ENCODE measurements at regions of chr5 and their contacts with region 1.

Region 1: DNA sequence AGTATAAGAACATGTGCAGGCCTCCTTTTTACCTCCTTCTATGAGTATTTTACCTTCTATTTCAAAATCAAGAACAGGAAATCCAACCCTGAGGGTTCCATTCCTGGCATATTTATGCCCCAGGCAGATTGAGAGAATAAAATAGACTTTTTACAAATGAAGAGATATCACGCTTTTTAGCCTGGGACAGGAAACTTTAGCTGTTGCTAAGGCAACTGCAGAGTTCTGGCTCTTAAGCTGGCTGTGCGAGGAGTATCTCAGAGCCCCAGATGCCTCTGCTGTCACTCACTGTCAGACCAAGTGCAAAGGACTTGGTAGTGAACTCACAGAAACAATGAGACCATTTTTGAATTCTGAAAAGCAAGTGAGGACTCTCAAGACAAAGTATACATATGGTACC is 69.5 kb upstream of the HSPB3 start:
- DNase-seq: no peak
- H3K4me3 ChIP-seq: no peak overlapping the region
- H3K4me3 Mint-ChIP-seq: no peak overlapping the region
- H3K27ac Mint-ChIP-seq: no peak overlapping the region
- H3K4me1 ChIP-seq: peaks cover 47% of the 10 kb centered on the region
- H3K4me1 Mint-ChIP-seq: peaks cover 26% of the 10 kb centered on the region
- H3K27me3 ChIP-seq: no peaks in the 10 kb centered on the region
- H3K27me3 Mint-ChIP-seq: no peaks in the 10 kb centered on the region
- CTCF ChIP-seq: no peak

Region 2: DNA sequence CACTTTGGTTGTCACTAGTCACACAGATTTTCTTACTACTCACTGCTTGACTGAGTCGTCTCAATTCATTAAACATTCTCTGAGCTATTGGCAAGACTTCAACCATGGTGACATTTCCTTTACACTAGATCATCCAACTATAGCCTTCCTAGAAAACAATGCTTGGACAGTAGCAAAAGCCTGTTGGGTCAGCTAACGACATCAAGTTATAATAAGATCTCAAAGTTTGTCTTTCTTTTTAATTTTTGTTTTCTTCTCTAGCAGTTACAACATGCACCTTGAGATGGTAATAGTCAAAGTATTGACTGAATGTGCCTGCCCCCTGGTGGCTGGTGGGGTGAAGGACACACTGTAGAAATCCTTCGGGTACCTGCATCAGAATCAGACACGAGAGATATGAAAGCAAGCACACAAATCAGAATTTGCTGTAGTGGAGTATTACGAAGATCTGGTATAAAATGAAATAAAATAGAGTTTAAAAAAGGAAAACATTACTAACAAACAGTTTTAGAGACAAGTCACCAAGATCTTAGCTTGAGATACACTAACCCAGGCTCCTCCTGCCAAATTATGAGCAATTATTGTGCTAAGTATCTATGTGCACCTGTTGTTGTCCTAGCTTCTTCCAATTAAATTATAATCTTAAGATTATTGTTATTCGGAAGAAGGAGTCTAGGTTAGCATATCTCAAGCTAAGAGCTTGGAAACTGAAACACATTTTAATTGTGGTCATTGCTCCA is 156.8 kb before region 1 on chr5:
- CTCF ChIA-PET with region 1: no interaction called
- POLR2A ChIA-PET with region 1: no interaction called
- intact Hi-C with region 1: no loop called
- DNase-seq: peak; percentile 57 to 76
- H3K4me3 ChIP-seq: no peak overlapping the region
- H3K4me3 Mint-ChIP-seq: no peak overlapping the region
- H3K27ac Mint-ChIP-seq: no peak overlapping the region
- H3K4me1 ChIP-seq: no peaks in the 10 kb centered on the region
- H3K4me1 Mint-ChIP-seq: peaks cover 6% of the 10 kb centered on the region
- H3K27me3 ChIP-seq: no peaks in the 10 kb centered on the region
- H3K27me3 Mint-ChIP-seq: no peaks in the 10 kb centered on the region
- CTCF ChIP-seq: peak; percentile 89 to 93

Region 3: GRCh38 chr5:54329731-54330709 is 56.0 kb before region 1 on chr5:
- CTCF ChIA-PET with region 1: no interaction called
- POLR2A ChIA-PET with region 1: no interaction called
- intact Hi-C with region 1: loop called (anchors 1 kb)
- DNase-seq: peak; percentile 49 to 50
- H3K4me3 ChIP-seq: no peak overlapping the region
- H3K4me3 Mint-ChIP-seq: no peak overlapping the region
- H3K27ac Mint-ChIP-seq: peak overlapping the region; percentile 72
- H3K4me1 ChIP-seq: peaks cover 22% of the 10 kb centered on the region
- H3K4me1 Mint-ChIP-seq: peaks cover 18% of the 10 kb centered on the region
- H3K27me3 ChIP-seq: no peaks in the 10 kb centered on the region
- H3K27me3 Mint-ChIP-seq: no peaks in the 10 kb centered on the region
- CTCF ChIP-seq: peak in 1 of 2 experiments; percentile 15

Region 4: GRCh38 chr5:54403121-54403889 is 17.3 kb after region 1 on chr5:
- CTCF ChIA-PET with region 1: no interaction called
- POLR2A ChIA-PET with region 1: no interaction called
- intact Hi-C with region 1: loop called (anchors 2 kb)
- DNase-seq: no peak
- H3K4me3 ChIP-seq: no peak overlapping the region
- H3K4me3 Mint-ChIP-seq: no peak overlapping the region
- H3K27ac Mint-ChIP-seq: peak overlapping the region; percentile 60
- H3K4me1 ChIP-seq: peaks cover 31% of the 10 kb centered on the region
- H3K4me1 Mint-ChIP-seq: peaks cover 26% of the 10 kb centered on the region
- H3K27me3 ChIP-seq: no peaks in the 10 kb centered on the region
- H3K27me3 Mint-ChIP-seq: no peaks in the 10 kb centered on the region
- CTCF ChIP-seq: no peak